MCF 10A (cell line): ENCODE measurements at regions of chr6 and their contacts with region 1.

Region 1: DNA sequence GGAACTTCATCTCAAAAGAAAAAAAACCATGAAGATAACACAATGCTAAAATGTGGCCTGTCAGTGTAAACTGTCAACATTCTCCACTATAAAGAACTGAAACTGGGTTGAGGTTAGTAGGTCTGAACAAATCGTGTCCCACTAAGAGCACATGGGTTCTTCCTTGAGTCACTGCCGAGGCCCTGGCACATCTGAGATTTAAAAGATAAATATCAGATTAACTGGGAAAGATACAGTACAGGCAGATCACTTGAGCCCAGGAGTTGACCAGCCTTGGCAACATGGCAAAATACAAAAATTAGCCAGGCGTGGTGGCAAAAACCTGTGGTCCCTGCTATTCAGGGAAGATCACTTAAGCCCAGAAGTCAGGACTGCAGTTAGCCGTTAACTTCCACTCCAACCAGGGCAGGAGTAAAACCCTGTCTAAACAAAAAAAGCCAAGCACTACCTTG is 5.6 kb downstream of the EEF1A1 start:
- DNase-seq: peak; percentile 32
- H3K4me3 Mint-ChIP-seq: no peak overlapping the region
- H3K27ac Mint-ChIP-seq: peak overlapping the region; percentile 35
- H3K4me1 Mint-ChIP-seq: peaks cover 12% of the 10 kb centered on the region
- H3K27me3 Mint-ChIP-seq: no peaks in the 10 kb centered on the region
- CTCF ChIP-seq: no peak

Region 2: DNA sequence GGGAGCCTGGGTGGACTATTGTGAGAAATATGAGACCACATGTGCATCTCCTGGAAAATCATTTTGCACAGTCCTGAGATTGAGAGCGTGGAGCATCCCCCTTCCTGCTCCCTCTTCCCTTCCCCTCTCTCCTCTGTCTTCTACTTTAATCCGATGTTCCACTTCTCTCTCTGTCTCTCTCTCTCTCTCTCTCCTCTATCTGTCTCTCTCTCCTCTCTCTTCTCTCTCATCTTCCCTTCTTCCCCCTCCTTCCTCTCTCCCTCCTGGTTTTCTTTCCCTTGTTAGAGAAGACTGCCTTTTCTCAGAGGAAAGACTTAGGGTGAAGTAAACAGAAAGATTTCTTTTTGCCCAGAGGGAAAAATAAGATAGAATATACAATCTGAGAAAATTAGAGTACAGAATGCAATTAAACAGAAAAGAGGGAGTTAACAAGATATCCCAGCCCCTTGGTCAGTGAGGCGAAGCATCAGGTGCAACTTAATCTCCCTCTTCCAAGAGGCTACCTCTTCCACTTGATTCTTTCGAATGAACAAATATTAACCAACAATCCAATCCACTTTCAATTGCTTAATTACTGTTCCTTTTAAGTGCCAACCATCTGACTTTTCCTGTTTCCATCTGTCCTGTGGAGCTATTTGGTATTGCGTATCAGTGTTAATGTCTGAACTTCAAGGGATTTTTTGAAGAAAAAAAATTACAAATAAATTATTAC is 266.9 kb before region 1 on chr6:
- CTCF ChIA-PET with region 1: no interaction called
- POLR2A ChIA-PET with region 1: no interaction called
- intact Hi-C with region 1: no loop called
- DNase-seq: no peak
- H3K4me3 Mint-ChIP-seq: no peak overlapping the region
- H3K27ac Mint-ChIP-seq: no peak overlapping the region
- H3K4me1 Mint-ChIP-seq: no peaks in the 10 kb centered on the region
- H3K27me3 Mint-ChIP-seq: no peaks in the 10 kb centered on the region
- CTCF ChIP-seq: no peak

Region 3: DNA sequence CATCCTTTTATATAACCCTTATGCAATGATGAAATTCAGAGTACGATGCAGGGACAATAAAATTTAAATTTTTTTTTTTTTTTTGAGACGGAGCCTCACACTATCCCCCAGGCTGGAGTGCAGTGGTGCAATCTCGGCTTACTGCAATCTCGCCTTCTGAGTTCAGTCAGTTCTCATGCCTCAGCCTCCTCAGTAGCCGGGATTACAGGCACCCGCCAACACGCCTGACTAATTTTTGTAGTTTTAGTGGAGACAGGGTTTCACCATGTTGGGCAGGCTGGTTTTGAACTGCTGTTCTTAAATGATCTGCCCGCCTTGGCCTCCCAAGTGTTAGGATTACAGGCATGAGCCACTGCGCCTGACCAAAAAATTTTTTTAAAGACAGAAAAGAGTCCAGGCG is 38.5 kb before region 1 on chr6:
- CTCF ChIA-PET with region 1: no interaction called
- POLR2A ChIA-PET with region 1: no interaction called
- intact Hi-C with region 1: no loop called
- DNase-seq: no peak
- H3K4me3 Mint-ChIP-seq: no peak overlapping the region
- H3K27ac Mint-ChIP-seq: no peak overlapping the region
- H3K4me1 Mint-ChIP-seq: no peaks in the 10 kb centered on the region
- H3K27me3 Mint-ChIP-seq: no peaks in the 10 kb centered on the region
- CTCF ChIP-seq: no peak

Region 4: GRCh38 chr6:73503027-73503772 is 12.0 kb before region 1 on chr6:
- CTCF ChIA-PET with region 1: interaction called, 10 read pairs
- POLR2A ChIA-PET with region 1: interaction called, 9 read pairs
- intact Hi-C with region 1: no loop called
- DNase-seq: no peak
- H3K4me3 Mint-ChIP-seq: no peak overlapping the region
- H3K27ac Mint-ChIP-seq: no peak overlapping the region
- H3K4me1 Mint-ChIP-seq: no peaks in the 10 kb centered on the region
- H3K27me3 Mint-ChIP-seq: no peaks in the 10 kb centered on the region
- CTCF ChIP-seq: no peak

Region 5: GRCh38 chr6:73585566-73586415 is 70.6 kb after region 1 on chr6:
- CTCF ChIA-PET with region 1: interaction called, 15 read pairs
- POLR2A ChIA-PET with region 1: interaction called, 244 read pairs
- intact Hi-C with region 1: no loop called
- DNase-seq: peak; percentile 79
- H3K4me3 Mint-ChIP-seq: peak overlapping the region; percentile 63
- H3K27ac Mint-ChIP-seq: peak overlapping the region; percentile 98
- H3K4me1 Mint-ChIP-seq: peaks cover 10% of the 10 kb centered on the region
- H3K27me3 Mint-ChIP-seq: no peaks in the 10 kb centered on the region
- CTCF ChIP-seq: no peak

Region 6: DNA sequence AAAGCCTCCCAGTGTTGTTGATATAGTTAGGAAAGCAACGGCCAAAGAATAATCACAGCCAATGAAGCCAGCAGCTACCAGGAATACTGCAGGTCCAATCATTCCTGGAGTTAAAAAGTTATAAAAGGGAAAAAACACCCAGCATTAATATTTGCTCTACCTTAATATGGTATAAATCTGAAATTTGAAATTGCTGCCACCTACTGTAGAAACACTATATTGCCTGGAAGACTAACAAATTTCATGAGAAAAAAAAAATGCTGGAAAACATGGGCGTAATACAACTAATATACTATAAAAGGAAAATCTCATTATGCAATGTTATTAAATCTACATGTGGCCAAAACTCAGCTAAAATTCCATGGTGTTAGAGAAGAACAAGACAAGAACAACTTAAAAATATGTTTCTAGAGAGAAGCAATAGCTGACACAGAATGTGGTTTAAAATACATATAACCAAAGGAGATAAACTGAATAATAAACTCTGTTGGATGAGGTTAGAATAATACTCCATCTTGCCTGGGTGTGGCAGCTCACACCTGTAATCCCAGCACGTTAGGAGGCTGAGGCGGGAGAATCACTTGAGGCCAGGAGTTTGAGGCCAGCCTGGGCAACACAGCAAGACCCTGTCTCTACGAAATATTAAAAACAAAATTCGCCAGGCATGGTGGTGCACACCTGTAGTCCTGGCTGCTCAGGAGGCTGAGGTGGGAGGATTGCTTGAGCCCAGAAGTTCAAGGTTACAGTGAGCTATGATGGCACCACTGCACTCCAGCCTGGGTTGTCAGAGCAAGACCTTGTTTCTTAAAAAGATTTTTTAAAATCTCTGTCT is 95.4 kb after region 1 on chr6:
- CTCF ChIA-PET with region 1: interaction called, 108 read pairs
- POLR2A ChIA-PET with region 1: interaction called, 185 read pairs
- intact Hi-C with region 1: loop called (anchors 1 kb)
- DNase-seq: peak; percentile 64
- H3K4me3 Mint-ChIP-seq: no peak overlapping the region
- H3K27ac Mint-ChIP-seq: peak overlapping the region; percentile 19
- H3K4me1 Mint-ChIP-seq: no peaks in the 10 kb centered on the region
- H3K27me3 Mint-ChIP-seq: no peaks in the 10 kb centered on the region
- CTCF ChIP-seq: peak; percentile 42

Region 7: GRCh38 chr6:73653571-73654424 is 138.6 kb after region 1 on chr6 and contains the start of gene SLC17A5:
- CTCF ChIA-PET with region 1: interaction called, 12 read pairs
- POLR2A ChIA-PET with region 1: interaction called, 196 read pairs
- intact Hi-C with region 1: loop called (anchors 1 kb)
- DNase-seq: peak; percentile 95
- H3K4me3 Mint-ChIP-seq: peak within 1 kb of the TSS; percentile 97
- H3K27ac Mint-ChIP-seq: peak within 1 kb of the TSS; percentile 91
- H3K4me1 Mint-ChIP-seq: peaks cover 32% of the 10 kb centered on the region
- H3K27me3 Mint-ChIP-seq: no peaks in the 10 kb centered on the region
- CTCF ChIP-seq: no peak
- total RNA-seq, gene SLC17A5: 6.1 and 7.2 TPM in 2 replicates